ENCODE measurements at regions of chr14 and their contacts with region 1.

Region 1: GRCh38 chr14:89915114-89915878 is 39.2 kb downstream of the EFCAB11 start:
- DNase-seq: peak; percentile 73
- ATAC-seq: no peak
- H3K4me3 Mint-ChIP-seq: no peak overlapping the region
- H3K27ac Mint-ChIP-seq: no peak overlapping the region
- H3K4me1 Mint-ChIP-seq: peaks cover 3% of the 10 kb centered on the region
- H3K27me3 Mint-ChIP-seq: peaks cover 3% of the 10 kb centered on the region

Region 2: DNA sequence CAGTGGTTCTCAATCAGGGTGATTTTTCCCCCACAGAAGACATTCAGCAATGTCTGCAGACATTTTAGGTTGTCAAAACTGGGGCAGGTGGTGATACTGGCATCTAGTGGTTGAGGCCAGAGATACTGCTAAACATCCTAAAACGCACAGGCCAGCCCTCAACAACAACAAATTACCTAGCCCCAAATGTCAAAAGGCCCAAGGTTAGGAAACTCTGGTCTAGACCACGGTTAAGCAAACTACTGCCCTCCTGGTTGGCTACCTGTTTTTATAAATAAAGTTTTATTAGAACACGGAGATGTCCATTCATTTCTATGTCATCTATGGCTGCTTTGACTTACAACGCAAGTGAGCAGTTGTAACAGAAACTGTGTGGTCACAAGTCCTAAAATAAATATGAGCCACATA is 147.4 kb before region 1 on chr14:
- CTCF ChIA-PET with region 1: interaction called, 3 read pairs
- POLR2A ChIA-PET with region 1: no interaction called
- intact Hi-C with region 1: loop called (anchors 5 to 10 kb)
- DNase-seq: peak; percentile 78
- ATAC-seq: peak; percentile 95
- H3K4me3 Mint-ChIP-seq: peak overlapping the region; percentile 13
- H3K27ac Mint-ChIP-seq: peak overlapping the region; percentile 82
- H3K4me1 Mint-ChIP-seq: peaks cover 25% of the 10 kb centered on the region
- H3K27me3 Mint-ChIP-seq: peaks cover 2% of the 10 kb centered on the region

Region 3: DNA sequence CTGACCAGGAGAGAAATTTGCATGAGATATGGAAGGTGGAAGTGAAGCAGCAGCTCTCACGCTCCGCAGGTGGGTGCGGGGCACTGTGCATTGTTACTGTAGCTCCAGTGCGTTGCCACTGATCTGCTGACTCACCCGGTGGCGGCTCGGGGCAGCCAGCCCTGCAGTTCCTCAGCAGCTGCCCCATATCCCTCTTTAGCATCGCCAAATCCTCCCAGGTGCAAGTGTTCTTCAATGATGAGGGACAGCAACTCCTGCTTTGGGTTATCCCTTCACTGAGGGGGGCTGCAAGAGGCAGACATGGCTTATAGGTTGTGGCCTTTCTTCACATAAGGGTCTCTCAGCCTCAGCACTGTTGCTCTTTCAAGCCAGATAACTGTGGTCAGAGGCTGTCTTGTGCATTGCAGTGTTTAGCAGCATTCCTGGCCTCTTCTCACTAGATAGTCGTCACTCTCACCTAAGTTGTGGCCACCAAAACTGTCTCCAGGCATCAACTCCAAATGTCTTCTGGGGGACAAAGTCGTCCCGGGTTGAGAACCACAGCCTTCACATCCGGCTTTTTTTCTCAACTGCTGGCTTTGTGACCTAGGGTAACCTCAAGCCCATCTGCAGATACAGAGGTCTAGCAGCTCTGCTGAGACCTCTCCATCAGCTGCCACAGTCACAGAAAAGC is 141.5 kb before region 1 on chr14:
- CTCF ChIA-PET with region 1: no interaction called
- POLR2A ChIA-PET with region 1: no interaction called
- intact Hi-C with region 1: loop called (anchors 5 to 10 kb)
- DNase-seq: peak; percentile 85
- ATAC-seq: peak; percentile 97
- H3K4me3 Mint-ChIP-seq: peak overlapping the region; percentile 37
- H3K27ac Mint-ChIP-seq: peak overlapping the region; percentile 76
- H3K4me1 Mint-ChIP-seq: peaks cover 21% of the 10 kb centered on the region
- H3K27me3 Mint-ChIP-seq: peaks cover 2% of the 10 kb centered on the region